Posterior vena cava (tissue), 2 donors: ENCODE measurements at regions of chr16 and their contacts with region 1.

Region 1: GRCh38 chr16:57741660-57742191 is 6.2 kb downstream of the KATNB1 start:
- DNase-seq: no peak

Region 2: GRCh38 chr16:57700781-57701551 is 40.8 kb before region 1 on chr16:
- intact Hi-C with region 1: no loop called
- DNase-seq: no peak

Region 3: DNA sequence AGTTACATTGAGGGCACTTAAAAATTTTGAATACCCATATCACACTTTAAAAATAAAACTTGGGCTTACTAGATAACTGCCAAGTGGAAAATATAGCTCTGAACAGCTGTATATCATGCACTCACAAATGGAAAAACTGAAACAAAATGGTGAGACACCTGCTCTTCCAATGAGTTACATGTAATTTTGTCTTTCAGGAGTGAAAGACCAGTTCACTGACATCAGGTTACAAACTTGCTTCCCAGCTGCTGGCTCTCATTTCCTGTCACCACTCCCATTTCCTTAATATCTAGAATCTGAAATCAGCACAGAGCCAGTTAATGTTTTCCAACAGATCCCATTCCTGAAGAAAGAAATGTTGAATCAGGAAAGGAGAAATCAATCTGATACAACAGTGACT is 445.4 kb after region 1 on chr16:
- intact Hi-C with region 1: loop called in 1 of 2 experiments (anchors 5 kb)
- DNase-seq: no peak